Posterior vena cava (tissue), 2 donors: ENCODE measurements at regions of chr2 and their contacts with region 1.

Region 1: GRCh38 chr2:223860809-223861738 is 23.7 kb upstream of the AP1S3 start:
- DNase-seq: no peak

Region 2: DNA sequence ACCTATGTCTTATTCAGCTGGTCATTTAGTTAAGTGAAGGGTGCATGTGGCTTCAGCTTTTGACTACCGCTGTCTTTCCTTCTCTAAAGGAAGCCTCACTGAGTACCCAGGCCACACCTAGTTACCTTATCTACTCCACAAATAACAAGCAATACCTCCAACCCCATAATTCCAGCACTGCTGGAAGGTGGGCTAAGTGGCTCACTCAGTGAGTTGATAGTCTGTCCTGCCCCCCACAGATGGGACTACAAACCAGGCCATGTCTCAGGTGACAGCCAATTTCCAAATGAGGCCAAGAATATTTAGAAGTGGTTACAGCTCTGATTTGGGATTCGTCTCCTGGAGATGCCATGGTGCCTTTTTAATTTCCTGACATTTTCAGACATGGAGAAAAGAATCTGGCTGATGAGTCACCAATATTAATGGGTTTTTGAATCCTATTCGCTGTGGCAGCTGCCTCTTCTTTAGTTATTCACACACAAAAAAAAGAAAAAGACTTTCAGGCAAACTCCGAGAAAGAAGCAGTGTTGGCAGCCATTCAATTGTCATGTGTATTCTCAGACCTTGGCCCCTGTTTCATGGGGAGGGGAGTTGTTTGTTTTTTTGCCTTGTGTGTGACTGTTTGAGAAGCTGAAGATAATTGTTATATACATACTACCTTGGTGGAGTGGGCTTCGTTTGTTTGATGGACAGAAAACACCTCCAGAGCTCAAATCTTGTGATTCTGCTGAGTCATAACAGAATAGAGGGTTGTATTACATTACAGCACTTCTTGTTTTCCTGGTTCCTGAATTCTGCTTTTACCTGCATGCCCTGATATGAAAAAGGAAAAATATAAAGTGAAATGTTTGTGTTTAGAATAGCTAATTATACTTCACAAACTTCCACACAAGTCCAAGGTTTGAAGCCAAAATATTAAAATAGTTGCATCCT is 323.1 kb before region 1 on chr2:
- intact Hi-C with region 1: loop called in 1 of 2 experiments (anchors 5 kb)
- DNase-seq: no peak

Region 3: GRCh38 chr2:223674998-223675609 is 186.0 kb before region 1 on chr2:
- intact Hi-C with region 1: loop called in 1 of 2 experiments (anchors 5 kb)
- DNase-seq: no peak